PC-3 (cell line): ENCODE measurements at regions of chr1 and their contacts with region 1.

Region 1: GRCh38 chr1:185156854-185157598 is at the starts of genes SWT1 and TRMT1L:
- DNase-seq: peak; percentile 95
- ATAC-seq: peak; percentile 91
- H3K4me3 ChIP-seq: peak within 1 kb of the TSS; percentile 96
- H3K27ac ChIP-seq: peak within 1 kb of the TSS; percentile 67
- H3K4me1 ChIP-seq: peaks cover 23% of the 10 kb centered on the region
- H3K27me3 ChIP-seq: no peaks in the 10 kb centered on the region
- CTCF ChIP-seq: no peak
- total RNA-seq, gene SWT1: 0.69 and 1.5 TPM in 2 replicates
- total RNA-seq, gene TRMT1L: 6.9 and 11.3 TPM in 2 replicates

Region 2: DNA sequence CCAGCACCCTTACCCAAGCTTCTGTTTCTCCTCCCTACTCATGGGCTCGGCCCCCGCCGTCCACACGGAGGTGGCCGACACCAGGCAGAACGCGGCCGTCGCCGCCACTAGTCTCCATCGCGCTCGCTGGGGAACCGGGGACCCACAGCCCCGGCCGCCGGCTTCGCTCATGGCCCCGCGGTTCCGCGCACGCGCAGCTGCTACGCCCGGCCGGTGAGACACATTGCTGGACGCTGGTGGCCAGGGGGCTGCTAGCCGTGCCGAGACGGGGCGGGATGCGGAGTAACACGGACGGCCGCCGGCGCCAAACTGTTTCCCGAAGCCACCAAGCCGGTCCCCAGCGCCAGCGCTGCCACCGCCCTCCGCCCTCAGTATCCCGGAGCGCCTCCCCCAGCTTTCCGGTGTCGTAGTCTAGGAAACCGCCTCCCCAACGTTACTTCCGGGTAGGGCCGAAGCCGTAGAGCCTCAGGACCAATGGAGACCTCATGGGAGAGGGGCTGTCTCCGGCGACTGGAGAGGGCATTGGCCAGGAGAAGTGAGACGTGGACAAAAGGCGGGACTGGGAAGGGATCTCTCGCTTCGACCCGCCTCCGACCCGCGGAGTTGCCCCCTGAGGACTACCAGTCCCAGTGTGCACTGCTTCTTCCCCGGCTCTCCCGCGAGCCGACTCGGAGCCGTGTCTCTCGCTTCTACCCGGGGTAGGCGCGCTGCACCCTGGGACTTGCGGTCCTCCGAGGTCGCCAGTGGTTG is 402.4 kb before region 1 on chr1 and contains the start of gene EDEM3:
- CTCF ChIA-PET with region 1: no interaction called
- POLR2A ChIA-PET with region 1: no interaction called
- intact Hi-C with region 1: loop called (anchors 2 kb)
- DNase-seq: peak; percentile 95
- ATAC-seq: peak; percentile 92
- H3K4me3 ChIP-seq: peak within 1 kb of the TSS; percentile 93
- H3K27ac ChIP-seq: peak within 1 kb of the TSS; percentile 80
- H3K4me1 ChIP-seq: peaks cover 37% of the 10 kb centered on the region
- H3K27me3 ChIP-seq: no peaks in the 10 kb centered on the region
- CTCF ChIP-seq: no peak
- total RNA-seq, gene EDEM3: 12.8 and 16.2 TPM in 2 replicates

Region 3: GRCh38 chr1:184805667-184806295 is 351.2 kb before region 1 on chr1:
- CTCF ChIA-PET with region 1: no interaction called
- POLR2A ChIA-PET with region 1: no interaction called
- intact Hi-C with region 1: loop called (anchors 5 kb)
- DNase-seq: peak; percentile 78
- ATAC-seq: peak; percentile 94
- H3K4me3 ChIP-seq: no peak overlapping the region
- H3K27ac ChIP-seq: no peak overlapping the region
- H3K4me1 ChIP-seq: peaks cover 28% of the 10 kb centered on the region
- H3K27me3 ChIP-seq: no peaks in the 10 kb centered on the region
- CTCF ChIP-seq: peak; percentile 78

Region 4: DNA sequence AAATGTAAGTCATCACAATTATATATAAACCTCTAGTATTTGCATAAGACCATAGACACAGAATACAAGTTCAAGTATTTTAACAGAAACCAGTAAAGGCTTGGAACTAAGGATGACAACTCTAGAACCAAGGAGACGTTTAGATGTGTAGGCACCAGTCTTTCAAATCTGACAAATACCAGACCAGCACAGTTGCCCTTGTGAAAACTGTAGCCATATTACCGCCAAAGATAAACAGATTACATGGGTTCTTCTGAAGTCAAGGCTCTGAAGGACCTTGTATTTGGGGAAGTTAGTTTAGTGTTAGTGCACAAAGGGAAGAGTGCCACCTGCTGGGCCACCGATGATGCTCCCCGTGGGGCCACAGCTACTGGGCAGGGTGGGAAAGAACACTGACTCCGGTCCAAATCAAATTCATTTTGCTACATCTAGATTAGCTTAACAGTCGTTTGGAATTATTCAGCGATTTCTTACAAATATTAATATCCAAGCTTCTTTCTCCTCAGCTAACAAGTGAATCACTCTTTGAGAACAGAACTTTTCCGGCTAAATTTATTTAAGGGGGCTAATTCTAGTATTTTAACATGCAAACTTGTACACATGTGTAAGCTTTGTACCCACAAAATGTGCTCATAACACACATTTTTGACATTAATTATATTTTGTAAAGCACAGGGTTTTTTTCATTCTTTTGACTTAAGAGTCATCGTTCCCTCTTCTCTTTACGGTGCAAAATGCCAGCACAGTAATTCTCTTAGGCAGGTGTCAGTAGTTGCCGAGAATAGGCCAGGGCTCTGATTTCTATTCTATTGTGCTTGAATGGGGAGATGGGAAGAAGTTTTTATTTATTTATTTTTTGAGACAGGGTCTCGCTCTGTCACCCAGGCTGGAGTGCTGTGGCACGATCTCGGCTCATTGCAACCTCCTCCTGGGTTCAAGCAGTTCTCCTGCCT is 174.7 kb before region 1 on chr1:
- CTCF ChIA-PET with region 1: no interaction called
- POLR2A ChIA-PET with region 1: no interaction called
- intact Hi-C with region 1: loop called (anchors 5 kb)
- DNase-seq: peak; percentile 65
- ATAC-seq: peak; percentile 94
- H3K4me3 ChIP-seq: no peak overlapping the region
- H3K27ac ChIP-seq: no peak overlapping the region
- H3K4me1 ChIP-seq: no peaks in the 10 kb centered on the region
- H3K27me3 ChIP-seq: no peaks in the 10 kb centered on the region
- CTCF ChIP-seq: peak; percentile 88

Region 5: GRCh38 chr1:185044981-185045813 is 111.8 kb before region 1 on chr1 and contains the start of gene RNF2:
- CTCF ChIA-PET with region 1: no interaction called
- POLR2A ChIA-PET with region 1: no interaction called
- intact Hi-C with region 1: loop called (anchors 5 kb)
- DNase-seq: peak; percentile 67
- ATAC-seq: peak; percentile 83
- H3K4me3 ChIP-seq: peak within 1 kb of the TSS; percentile 97
- H3K27ac ChIP-seq: peak within 1 kb of the TSS; percentile 36; the same call in 1 of the 2 replicates
- H3K4me1 ChIP-seq: peaks cover 19% of the 10 kb centered on the region
- H3K27me3 ChIP-seq: no peaks in the 10 kb centered on the region
- CTCF ChIP-seq: no peak
- total RNA-seq, gene RNF2: 9.8 and 13.6 TPM in 2 replicates

Region 6: GRCh38 chr1:185439727-185440415 is 282.8 kb after region 1 on chr1:
- CTCF ChIA-PET with region 1: interaction called, 11 read pairs
- POLR2A ChIA-PET with region 1: no interaction called
- intact Hi-C with region 1: no loop called
- DNase-seq: peak; percentile 83
- ATAC-seq: peak; percentile 87
- H3K4me3 ChIP-seq: no peak overlapping the region
- H3K27ac ChIP-seq: peak overlapping the region; percentile 36; the same call in 1 of the 2 replicates
- H3K4me1 ChIP-seq: peaks cover 37% of the 10 kb centered on the region
- H3K27me3 ChIP-seq: no peaks in the 10 kb centered on the region
- CTCF ChIP-seq: no peak